ENCODE measurements at regions of chr4 and their contacts with region 1.

Region 1: GRCh38 chr4:7802093-7802726 is 137.5 kb downstream of the AFAP1 start:
- DNase-seq: peak; percentile 54 to 79 (median 61)
- H3K4me3 ChIP-seq: no peak overlapping the region
- H3K4me3 Mint-ChIP-seq: no peak overlapping the region
- H3K27ac ChIP-seq: no peak overlapping the region
- H3K27ac Mint-ChIP-seq: peak overlapping the region in 4 of 8 donors; percentile 13 to 79 (median 52)
- H3K4me1 ChIP-seq: no peaks in the 10 kb centered on the region
- H3K4me1 Mint-ChIP-seq: peaks cover 6 to 11% (median 8%) of the 10 kb centered on the region in 3 donors
- H3K27me3 ChIP-seq: no peaks in the 10 kb centered on the region
- H3K27me3 Mint-ChIP-seq: no peaks in the 10 kb centered on the region

Region 2: DNA sequence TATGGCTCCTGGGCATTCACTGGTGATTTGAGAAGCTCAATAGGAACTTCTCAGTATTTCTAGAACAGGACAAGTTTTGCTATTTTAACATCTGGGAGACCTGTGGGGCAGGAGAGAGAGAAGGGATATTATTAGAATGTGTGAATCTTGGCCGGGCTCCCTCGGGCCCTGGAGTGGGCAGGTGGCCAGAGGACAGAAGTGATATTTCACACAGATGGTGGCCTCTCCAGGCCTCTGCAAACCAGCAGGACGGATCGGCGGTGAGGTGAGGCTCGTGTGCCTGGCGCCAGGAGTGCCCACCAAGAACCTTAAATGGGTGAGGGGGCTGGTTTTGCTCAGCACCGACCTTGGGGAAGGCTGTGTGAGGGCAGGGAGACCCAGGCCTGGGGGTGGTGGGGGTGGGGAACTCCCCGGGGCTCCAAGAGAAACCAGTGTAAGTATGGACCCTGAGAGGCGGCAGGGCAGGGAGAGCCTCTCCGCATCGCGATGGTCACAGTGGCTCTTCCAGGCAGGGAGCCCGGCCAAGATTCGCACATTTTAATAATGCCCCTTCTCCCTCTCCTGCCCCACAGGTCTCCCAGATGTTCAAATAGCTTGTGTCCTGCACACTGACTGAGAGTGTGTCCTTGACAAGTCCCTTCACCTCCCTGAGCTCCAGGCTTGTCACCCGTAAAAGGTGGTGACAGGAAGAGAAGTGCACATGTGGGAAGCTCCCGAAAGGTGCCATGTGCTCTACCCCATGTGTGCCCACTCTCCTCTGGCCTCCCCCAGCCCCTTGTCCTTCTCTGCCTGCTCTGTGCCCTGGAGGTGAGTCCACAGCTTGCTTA is 545.0 kb before region 1 on chr4:
- CTCF ChIA-PET with region 1: no interaction called
- POLR2A ChIA-PET with region 1: no interaction called
- DNase-seq: no peak
- H3K4me3 ChIP-seq: no peak overlapping the region
- H3K4me3 Mint-ChIP-seq: no peak overlapping the region
- H3K27ac ChIP-seq: no peak overlapping the region
- H3K27ac Mint-ChIP-seq: no peak overlapping the region
- H3K4me1 ChIP-seq: no peaks in the 10 kb centered on the region
- H3K4me1 Mint-ChIP-seq: no peaks in the 10 kb centered on the region
- H3K27me3 ChIP-seq: no peaks in the 10 kb centered on the region
- H3K27me3 Mint-ChIP-seq: peaks cover 6 to 15% of the 10 kb centered on the region in 2 donors

Region 3: GRCh38 chr4:7761312-7761711 is 40.9 kb before region 1 on chr4:
- CTCF ChIA-PET with region 1: interaction called, 3 read pairs
- POLR2A ChIA-PET with region 1: interaction called, 12 read pairs
- DNase-seq: no peak
- H3K4me3 ChIP-seq: no peak overlapping the region
- H3K4me3 Mint-ChIP-seq: peak overlapping the region in 4 of 7 donors; percentile 35 to 50 (median 38)
- H3K27ac ChIP-seq: no peak overlapping the region
- H3K27ac Mint-ChIP-seq: peak overlapping the region in 5 of 8 donors; percentile 61 to 92 (median 76)
- H3K4me1 ChIP-seq: peaks cover 35% of the 10 kb centered on the region
- H3K4me1 Mint-ChIP-seq: peaks cover 24 to 28% (median 25%) of the 10 kb centered on the region in 3 donors
- H3K27me3 ChIP-seq: no peaks in the 10 kb centered on the region
- H3K27me3 Mint-ChIP-seq: no peaks in the 10 kb centered on the region

Region 4: GRCh38 chr4:7818399-7818911 is 16.2 kb after region 1 on chr4:
- CTCF ChIA-PET with region 1: interaction called, 39 read pairs
- POLR2A ChIA-PET with region 1: no interaction called
- DNase-seq: no peak
- H3K4me3 ChIP-seq: no peak overlapping the region
- H3K4me3 Mint-ChIP-seq: no peak overlapping the region
- H3K27ac ChIP-seq: no peak overlapping the region
- H3K27ac Mint-ChIP-seq: peak overlapping the region in 2 of 8 donors; percentile 22 to 82
- H3K4me1 ChIP-seq: no peaks in the 10 kb centered on the region
- H3K4me1 Mint-ChIP-seq: peaks cover 0 to 5% (median 3%) of the 10 kb centered on the region in 3 donors
- H3K27me3 ChIP-seq: no peaks in the 10 kb centered on the region
- H3K27me3 Mint-ChIP-seq: peaks cover 0 to 2% of the 10 kb centered on the region in 2 donors

Region 5: GRCh38 chr4:7827991-7828720 is 25.9 kb after region 1 on chr4:
- CTCF ChIA-PET with region 1: interaction called, 25 read pairs
- POLR2A ChIA-PET with region 1: no interaction called
- DNase-seq: peak; percentile 23 to 87 (median 59)
- H3K4me3 ChIP-seq: peak overlapping the region; percentile 30
- H3K4me3 Mint-ChIP-seq: peak overlapping the region; percentile 37 to 86 (median 73)
- H3K27ac ChIP-seq: peak overlapping the region; percentile 45
- H3K27ac Mint-ChIP-seq: peak overlapping the region; percentile 91 to 97 (median 92)
- H3K4me1 ChIP-seq: peaks cover 34% of the 10 kb centered on the region
- H3K4me1 Mint-ChIP-seq: peaks cover 48 to 68% (median 68%) of the 10 kb centered on the region in 3 donors
- H3K27me3 ChIP-seq: no peaks in the 10 kb centered on the region
- H3K27me3 Mint-ChIP-seq: peaks cover 0 to 5% of the 10 kb centered on the region in 2 donors

Region 6: GRCh38 chr4:7843831-7844593 is 41.8 kb after region 1 on chr4:
- CTCF ChIA-PET with region 1: interaction called, 44 read pairs
- POLR2A ChIA-PET with region 1: no interaction called
- DNase-seq: peak; percentile 37 to 78 (median 57)
- H3K4me3 ChIP-seq: no peak overlapping the region
- H3K4me3 Mint-ChIP-seq: peak overlapping the region in 1 of 7 donors; percentile 52
- H3K27ac ChIP-seq: no peak overlapping the region
- H3K27ac Mint-ChIP-seq: peak overlapping the region in 5 of 8 donors; percentile 48 to 89 (median 75)
- H3K4me1 ChIP-seq: peaks cover 10% of the 10 kb centered on the region
- H3K4me1 Mint-ChIP-seq: peaks cover 14 to 25% (median 25%) of the 10 kb centered on the region in 3 donors
- H3K27me3 ChIP-seq: no peaks in the 10 kb centered on the region
- H3K27me3 Mint-ChIP-seq: peaks cover 0 to 2% of the 10 kb centered on the region in 2 donors

Region 7: DNA sequence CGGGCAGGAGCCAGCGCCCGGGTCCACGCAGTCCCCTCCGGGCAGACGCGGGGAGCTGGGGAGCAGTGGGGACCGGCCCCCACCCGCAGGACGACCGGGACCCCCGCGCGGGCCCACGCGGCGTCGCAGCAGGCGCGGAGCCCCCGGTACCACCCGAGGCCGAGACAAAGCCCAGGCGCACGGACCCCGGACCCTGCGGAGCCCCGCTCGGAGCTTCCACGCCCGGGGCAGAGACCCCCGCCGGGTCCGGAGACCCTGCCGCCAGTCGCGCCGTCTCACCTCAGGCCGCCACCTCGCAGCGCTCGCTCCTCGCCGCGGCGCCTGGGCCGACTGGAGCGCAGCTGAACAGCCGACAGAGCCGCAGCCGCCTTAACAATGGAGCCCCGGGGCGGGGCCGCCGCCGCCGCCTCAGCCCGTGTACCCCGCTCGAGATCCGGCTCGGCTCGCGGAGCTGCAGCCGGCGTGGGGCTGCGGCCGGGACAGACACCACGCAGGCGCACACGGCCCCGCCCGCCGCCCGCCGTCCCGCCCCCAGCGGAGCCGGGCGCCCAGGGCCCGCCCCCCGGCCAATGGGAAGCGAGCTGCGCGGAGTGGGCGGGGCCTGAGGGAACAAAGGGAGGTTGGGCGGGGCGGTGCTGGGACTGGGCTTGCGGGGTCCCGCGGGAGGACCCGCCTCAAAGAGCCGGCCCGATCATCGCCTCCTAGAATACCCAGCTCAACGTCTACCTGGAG is 137.3 kb after region 1 on chr4 and contains the start of gene AFAP1:
- CTCF ChIA-PET with region 1: interaction called, 14 read pairs
- POLR2A ChIA-PET with region 1: interaction called, 3 read pairs
- DNase-seq: peak; percentile 85 to 91 (median 86)
- H3K4me3 ChIP-seq: peak within 1 kb of the TSS; percentile 61
- H3K4me3 Mint-ChIP-seq: peak within 1 kb of the TSS; percentile 58 to 95 (median 75)
- H3K27ac ChIP-seq: peak within 1 kb of the TSS; percentile 31
- H3K27ac Mint-ChIP-seq: peak within 1 kb of the TSS in 3 of 8 donors; percentile 20 to 81 (median 50)
- H3K4me1 ChIP-seq: peaks cover 20% of the 10 kb centered on the region
- H3K4me1 Mint-ChIP-seq: peaks cover 18 to 32% (median 24%) of the 10 kb centered on the region in 3 donors
- H3K27me3 ChIP-seq: no peaks in the 10 kb centered on the region
- H3K27me3 Mint-ChIP-seq: peaks cover 4 to 9% of the 10 kb centered on the region in 2 donors
- total RNA-seq, gene AFAP1: 18.4 to 19.9 TPM

Region 8: GRCh38 chr4:7987148-7987989 is 185.2 kb after region 1 on chr4:
- CTCF ChIA-PET with region 1: interaction called, 132 read pairs
- POLR2A ChIA-PET with region 1: no interaction called
- DNase-seq: peak; percentile 53 to 78 (median 62)
- H3K4me3 ChIP-seq: no peak overlapping the region
- H3K4me3 Mint-ChIP-seq: no peak overlapping the region
- H3K27ac ChIP-seq: no peak overlapping the region
- H3K27ac Mint-ChIP-seq: peak overlapping the region in 1 of 8 donors; percentile 68
- H3K4me1 ChIP-seq: peaks cover 4% of the 10 kb centered on the region
- H3K4me1 Mint-ChIP-seq: peaks cover 1 to 5% (median 4%) of the 10 kb centered on the region in 3 donors
- H3K27me3 ChIP-seq: no peaks in the 10 kb centered on the region
- H3K27me3 Mint-ChIP-seq: peaks cover 5% of the 10 kb centered on the region in 2 donors

Measured in CD8-positive, alpha-beta memory T cell (primary cell).